ENCODE measurements at regions of chr12 and their contacts with region 1.

Region 1: DNA sequence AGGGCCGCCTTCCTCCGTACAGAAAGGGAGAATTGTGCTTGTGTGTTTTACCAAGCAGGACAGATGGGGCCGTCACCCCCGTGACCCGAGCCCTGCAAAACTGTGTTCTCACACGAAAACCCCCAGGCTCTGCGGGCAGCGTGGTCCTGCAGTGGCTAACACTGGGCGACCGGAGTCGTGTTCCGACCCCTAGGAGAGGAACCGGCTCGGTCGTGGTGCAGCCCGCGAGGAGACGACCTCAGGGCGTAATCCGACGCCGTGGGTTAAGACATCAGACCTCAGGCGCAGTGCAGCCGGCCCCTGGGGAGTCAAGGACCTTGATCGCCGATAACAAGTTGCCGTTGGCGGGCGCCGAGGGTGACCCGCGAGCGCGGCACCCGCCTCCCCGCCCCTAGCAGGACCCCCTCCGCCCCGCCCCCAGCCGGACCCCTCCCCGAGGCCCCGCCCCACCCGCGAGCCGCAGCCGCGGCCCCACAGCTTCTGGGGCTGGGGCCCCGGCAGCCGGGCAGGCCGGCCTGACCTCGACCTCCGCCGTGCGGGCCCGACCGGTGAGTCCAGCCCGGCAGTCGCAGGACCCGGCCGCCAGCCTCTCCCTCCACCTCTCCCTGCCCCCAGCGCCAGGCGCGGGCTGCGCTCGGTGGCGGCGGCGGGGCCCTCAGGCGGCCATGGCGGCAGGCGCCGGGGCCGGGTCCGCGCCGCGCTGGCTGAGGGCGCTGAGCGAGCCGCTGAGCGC is at the start of gene CHPT1:
- DNase-seq: peak; percentile 40 to 75 (median 58)
- ATAC-seq: peak; percentile 82
- H3K4me3 ChIP-seq: peak within 1 kb of the TSS; percentile 88
- H3K4me3 Mint-ChIP-seq: peak within 1 kb of the TSS; percentile 92 to 95 (median 94)
- H3K27ac ChIP-seq: peak within 1 kb of the TSS; percentile 70
- H3K27ac Mint-ChIP-seq: peak within 1 kb of the TSS; percentile 66 to 93 (median 90)
- H3K4me1 ChIP-seq: peaks cover 4 to 14% of the 10 kb centered on the region in 2 donors
- H3K4me1 Mint-ChIP-seq: peaks cover 17 to 61% (median 53%) of the 10 kb centered on the region in 7 donors
- H3K27me3 ChIP-seq: no peaks in the 10 kb centered on the region
- H3K27me3 Mint-ChIP-seq: peaks cover 0 to 23% (median 0%) of the 10 kb centered on the region in 5 donors
- total RNA-seq, gene CHPT1: 6.5 to 22.6 (median 14.5) TPM

Region 2: GRCh38 chr12:101280006-101280505 is 417.3 kb before region 1 on chr12 and contains the start of gene UTP20:
- CTCF ChIA-PET with region 1: no interaction called
- POLR2A ChIA-PET with region 1: no interaction called
- intact Hi-C with region 1: loop called in 1 of 2 experiments (anchors 5 kb)
- DNase-seq: peak; percentile 90 to 94 (median 92)
- ATAC-seq: peak; percentile 100
- H3K4me3 ChIP-seq: peak within 1 kb of the TSS; percentile 72
- H3K4me3 Mint-ChIP-seq: peak within 1 kb of the TSS; percentile 92 to 97 (median 96)
- H3K27ac ChIP-seq: peak within 1 kb of the TSS; percentile 63
- H3K27ac Mint-ChIP-seq: peak within 1 kb of the TSS; percentile 77 to 94 (median 87)
- H3K4me1 ChIP-seq: peaks cover 5% of the 10 kb centered on the region in 2 donors
- H3K4me1 Mint-ChIP-seq: peaks cover 11 to 28% (median 16%) of the 10 kb centered on the region in 7 donors
- H3K27me3 ChIP-seq: no peaks in the 10 kb centered on the region
- H3K27me3 Mint-ChIP-seq: peaks cover 8 to 24% (median 16%) of the 10 kb centered on the region in 5 donors
- total RNA-seq, gene UTP20: 10.8 to 20.8 (median 14.9) TPM

Region 3: GRCh38 chr12:101414533-101415119 is 282.7 kb before region 1 on chr12:
- CTCF ChIA-PET with region 1: no interaction called
- POLR2A ChIA-PET with region 1: no interaction called
- intact Hi-C with region 1: loop called in 1 of 2 experiments (anchors 1 kb)
- DNase-seq: peak in 5 of 9 donors; percentile 11 to 23 (median 12)
- ATAC-seq: peak; percentile 40
- H3K4me3 ChIP-seq: no peak overlapping the region
- H3K4me3 Mint-ChIP-seq: no peak overlapping the region
- H3K27ac ChIP-seq: no peak overlapping the region
- H3K27ac Mint-ChIP-seq: no peak overlapping the region
- H3K4me1 ChIP-seq: no peaks in the 10 kb centered on the region
- H3K4me1 Mint-ChIP-seq: peaks cover 0 to 5% (median 0%) of the 10 kb centered on the region in 7 donors
- H3K27me3 ChIP-seq: no peaks in the 10 kb centered on the region
- H3K27me3 Mint-ChIP-seq: peaks cover 0 to 29% (median 2%) of the 10 kb centered on the region in 5 donors

Region 4: GRCh38 chr12:101670007-101670687 is 27.2 kb before region 1 on chr12:
- CTCF ChIA-PET with region 1: interaction called, 4 read pairs
- POLR2A ChIA-PET with region 1: interaction called, 3 read pairs
- intact Hi-C with region 1: loop called (anchors 1 to 2 kb)
- DNase-seq: peak in 7 of 9 donors; percentile 30 to 59 (median 54)
- ATAC-seq: peak; percentile 88
- H3K4me3 ChIP-seq: no peak overlapping the region
- H3K4me3 Mint-ChIP-seq: peak overlapping the region in 4 of 10 donors; percentile 30 to 44 (median 39)
- H3K27ac ChIP-seq: no peak overlapping the region
- H3K27ac Mint-ChIP-seq: peak overlapping the region in 8 of 9 donors; percentile 10 to 71 (median 40)
- H3K4me1 ChIP-seq: peaks cover 4 to 18% of the 10 kb centered on the region in 2 donors
- H3K4me1 Mint-ChIP-seq: peaks cover 13 to 28% (median 21%) of the 10 kb centered on the region in 7 donors
- H3K27me3 ChIP-seq: no peaks in the 10 kb centered on the region
- H3K27me3 Mint-ChIP-seq: peaks cover 5 to 15% (median 9%) of the 10 kb centered on the region in 5 donors

Region 5: DNA sequence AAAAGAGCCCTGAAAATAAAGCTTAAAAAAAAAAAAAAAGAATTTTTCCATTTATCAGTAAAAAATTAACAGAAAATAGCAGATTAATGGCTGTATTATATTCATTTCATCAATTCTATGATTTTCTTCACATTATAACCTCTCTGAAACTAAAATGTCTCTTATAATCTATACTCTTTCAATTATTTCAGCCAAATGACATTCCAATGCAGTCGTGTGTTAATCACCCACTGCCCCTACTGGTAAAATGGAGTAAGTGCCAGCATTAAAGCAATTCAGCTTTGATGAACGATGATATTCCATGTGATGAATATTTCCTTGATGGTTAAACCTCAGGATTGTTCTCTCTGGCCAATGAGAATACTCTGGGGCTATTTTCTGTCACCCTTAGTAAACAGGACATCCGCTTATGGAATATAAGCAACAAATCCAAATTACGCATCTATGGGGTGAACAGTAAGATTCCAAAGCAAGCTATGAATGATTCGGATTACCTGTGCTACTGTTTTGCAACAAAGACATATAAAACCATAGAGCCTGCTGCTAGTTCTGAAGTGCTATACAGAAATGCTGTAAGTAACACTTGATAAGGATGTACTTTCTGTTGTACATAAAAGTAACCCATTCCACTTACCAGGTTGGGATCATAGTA is 62.2 kb after region 1 on chr12:
- CTCF ChIA-PET with region 1: no interaction called
- POLR2A ChIA-PET with region 1: no interaction called
- intact Hi-C with region 1: loop called in 1 of 2 experiments (anchors 5 kb)
- DNase-seq: peak in 6 of 9 donors; percentile 16 to 41 (median 32)
- ATAC-seq: peak; percentile 73
- H3K4me3 ChIP-seq: no peak overlapping the region
- H3K4me3 Mint-ChIP-seq: no peak overlapping the region
- H3K27ac ChIP-seq: no peak overlapping the region
- H3K27ac Mint-ChIP-seq: no peak overlapping the region
- H3K4me1 ChIP-seq: no peaks in the 10 kb centered on the region
- H3K4me1 Mint-ChIP-seq: peaks cover 0 to 4% (median 2%) of the 10 kb centered on the region in 7 donors
- H3K27me3 ChIP-seq: no peaks in the 10 kb centered on the region
- H3K27me3 Mint-ChIP-seq: no peaks in the 10 kb centered on the region